Transverse colon (tissue), 4 donors: ENCODE measurements at regions of chr3 and their contacts with region 1.

Region 1: GRCh38 chr3:126465928-126466544 is 9.7 kb downstream of the ZXDC start:
- DNase-seq: peak; percentile 32
- H3K4me3 ChIP-seq: no peak overlapping the region
- H3K27ac ChIP-seq: no peak overlapping the region
- H3K4me1 ChIP-seq: peaks cover 0 to under 1% (median 0%) of the 10 kb centered on the region in 4 donors
- H3K27me3 ChIP-seq: no peaks in the 10 kb centered on the region
- CTCF ChIP-seq: no peak
- EP300 ChIP-seq: no peak
- POLR2A ChIP-seq: no peak

Region 2: DNA sequence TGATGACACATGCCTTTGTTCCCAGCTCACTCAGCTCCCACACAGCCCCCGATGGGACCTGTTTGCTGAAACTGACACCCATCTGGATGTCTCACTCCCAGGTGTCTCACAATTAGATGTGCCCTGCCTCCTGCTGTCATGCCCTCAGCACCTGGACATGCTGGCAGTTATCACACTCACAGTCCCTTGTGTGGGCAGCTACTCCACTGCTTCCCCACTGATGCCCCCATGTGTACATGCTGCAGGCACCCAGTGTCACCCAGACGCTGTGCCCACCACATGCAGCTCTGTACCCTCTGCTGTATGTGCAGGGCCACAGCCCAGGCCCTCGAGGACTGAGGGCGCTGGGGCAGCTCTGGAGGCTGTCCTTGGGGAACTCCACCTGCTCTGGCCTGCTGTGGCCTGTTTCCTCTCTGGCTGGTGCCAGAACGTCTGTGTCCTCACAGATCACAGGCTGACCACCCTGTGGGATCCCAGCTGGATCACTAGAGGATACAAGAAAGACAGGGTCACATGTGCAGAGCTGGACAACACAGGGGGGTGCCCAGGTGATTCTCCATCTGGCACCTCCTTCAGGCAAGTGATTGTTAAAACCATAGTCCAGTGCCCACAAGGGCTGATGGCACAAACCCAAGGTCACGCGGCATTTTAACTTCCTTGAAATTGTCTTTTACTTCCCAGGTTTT is 78.7 kb after region 1 on chr3:
- in situ Hi-C with region 1: no loop called
- intact Hi-C with region 1: loop called (anchors 2 kb)
- DNase-seq: peak; percentile 7
- H3K4me3 ChIP-seq: no peak overlapping the region
- H3K27ac ChIP-seq: no peak overlapping the region
- H3K4me1 ChIP-seq: no peaks in the 10 kb centered on the region
- H3K27me3 ChIP-seq: peaks cover 18% of the 10 kb centered on the region
- CTCF ChIP-seq: no peak
- EP300 ChIP-seq: no peak
- POLR2A ChIP-seq: no peak